GM12878 (cell line): ENCODE measurements at regions of chr16 and their contacts with region 1.

Region 1: DNA sequence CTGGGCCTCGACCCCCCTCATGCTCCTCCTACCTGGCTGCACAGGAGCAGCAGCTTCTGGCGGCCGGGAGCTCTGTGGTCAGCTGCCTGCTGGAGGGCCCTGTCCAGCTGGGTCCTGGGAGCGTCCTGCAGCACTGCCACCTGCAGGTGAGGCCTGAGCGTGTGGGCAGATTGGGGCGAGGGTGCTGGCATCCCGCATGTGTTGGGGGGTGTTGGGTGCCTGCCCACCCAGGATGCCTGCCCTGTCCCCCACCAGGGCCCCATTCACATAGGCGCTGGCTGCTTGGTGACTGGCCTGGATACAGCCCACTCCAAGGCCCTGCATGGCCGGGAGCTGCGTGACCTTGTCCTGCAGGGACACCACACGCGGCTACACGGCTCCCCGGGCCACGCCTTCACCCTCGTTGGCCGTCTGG is 16.5 kb downstream of the FCSK start:
- DNase-seq: no peak
- ATAC-seq: peak; percentile 26; the same call in 2 of the 3 replicates
- H3K4me3 ChIP-seq: no peak overlapping the region
- H3K27ac ChIP-seq: no peak overlapping the region
- H3K4me1 ChIP-seq: peaks cover 9% of the 10 kb centered on the region
- H3K27me3 ChIP-seq: no peaks in the 10 kb centered on the region
- CTCF ChIP-seq: peak in 2 of 3 experiments; percentile 11 to 26; a peak in 1 of 6 replicates
- EP300 ChIP-seq: no peak
- POLR2A ChIP-seq: 0 out of 2 replicates have a peak, but pooled peaks have one; percentile 15
- RAD21 ChIP-seq: peak; percentile 18; the same call in 1 of the 2 replicates

Region 2: GRCh38 chr16:70388006-70388680 is 82.8 kb before region 1 on chr16:
- CTCF ChIA-PET with region 1: interaction called, 3 read pairs
- POLR2A ChIA-PET with region 1: no interaction called
- RAD21 ChIA-PET with region 1: no interaction called
- SMC1A ChIA-PET with region 1: no interaction called
- in situ Hi-C with region 1: loop called (anchors 5 kb)
- intact Hi-C with region 1: no loop called
- DNase-seq: no peak
- ATAC-seq: no peak
- H3K4me3 ChIP-seq: no peak overlapping the region
- H3K27ac ChIP-seq: no peak overlapping the region
- H3K4me1 ChIP-seq: no peaks in the 10 kb centered on the region
- H3K27me3 ChIP-seq: no peaks in the 10 kb centered on the region
- CTCF ChIP-seq: no peak
- EP300 ChIP-seq: no peak
- POLR2A ChIP-seq: no peak
- RAD21 ChIP-seq: no peak